GM13976 (cell line): ENCODE measurements at regions of chr1 and their contacts with region 1.

Region 1: DNA sequence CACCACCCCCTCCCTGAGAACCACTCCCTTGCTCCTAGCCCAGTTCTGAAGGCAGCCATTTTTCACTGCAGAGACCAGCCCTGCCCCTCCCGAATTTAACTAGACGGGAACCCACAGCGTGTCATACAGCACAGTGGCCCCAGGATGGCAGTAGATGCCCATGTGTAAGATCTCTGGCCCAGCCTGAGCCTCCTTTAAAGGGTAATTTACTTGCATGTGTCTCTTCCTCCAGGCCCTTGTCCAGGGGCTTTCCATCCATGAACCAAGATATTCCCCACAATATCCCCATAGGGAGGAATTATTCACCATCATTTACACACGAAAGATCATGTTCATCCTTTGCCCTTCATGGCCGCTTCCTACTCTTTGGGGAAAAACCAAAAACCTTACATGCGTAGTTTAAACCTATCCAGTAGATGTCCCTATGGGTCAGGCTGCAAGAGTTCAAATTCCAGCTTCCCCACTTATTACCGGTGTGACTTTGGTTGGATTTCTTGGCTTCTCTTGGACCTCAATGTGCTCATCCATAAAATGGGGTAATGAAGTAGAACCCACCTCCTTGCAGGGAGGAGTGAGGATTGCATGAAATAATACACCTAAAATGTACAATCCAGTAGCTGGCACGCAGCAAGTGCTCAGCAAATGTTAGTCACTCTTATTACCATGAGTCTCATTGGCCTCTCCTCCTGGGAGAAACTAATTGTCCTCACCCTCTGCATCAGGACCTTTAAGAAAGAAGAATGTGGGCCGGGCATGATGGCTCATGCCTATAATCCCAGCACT is 4.0 kb upstream of the LACTBL1 start:
- DNase-seq: peak; percentile 76
- CTCF ChIP-seq: peak; percentile 76

Region 2: DNA sequence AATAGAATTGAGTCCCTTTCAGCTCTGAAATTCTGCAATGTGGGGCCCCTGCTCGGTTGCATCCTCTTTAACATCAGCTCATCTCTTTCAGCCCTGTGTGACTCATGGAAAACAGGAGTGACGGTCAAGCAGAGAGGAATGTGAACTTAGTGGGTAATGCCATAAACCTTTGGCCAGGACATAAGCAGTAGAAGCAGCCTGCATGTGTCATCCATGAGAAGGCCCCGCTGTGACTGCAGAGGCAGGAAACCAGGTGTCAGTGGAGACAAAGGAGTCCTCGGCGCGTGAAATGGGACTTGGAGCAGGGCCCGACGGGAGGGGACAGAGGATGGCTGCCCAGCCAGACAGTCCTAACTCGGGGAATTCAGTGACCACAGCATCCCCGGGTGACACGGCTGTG is 287.1 kb before region 1 on chr1:
- in situ Hi-C with region 1: no loop called
- DNase-seq: no peak
- CTCF ChIP-seq: no peak

Region 3: DNA sequence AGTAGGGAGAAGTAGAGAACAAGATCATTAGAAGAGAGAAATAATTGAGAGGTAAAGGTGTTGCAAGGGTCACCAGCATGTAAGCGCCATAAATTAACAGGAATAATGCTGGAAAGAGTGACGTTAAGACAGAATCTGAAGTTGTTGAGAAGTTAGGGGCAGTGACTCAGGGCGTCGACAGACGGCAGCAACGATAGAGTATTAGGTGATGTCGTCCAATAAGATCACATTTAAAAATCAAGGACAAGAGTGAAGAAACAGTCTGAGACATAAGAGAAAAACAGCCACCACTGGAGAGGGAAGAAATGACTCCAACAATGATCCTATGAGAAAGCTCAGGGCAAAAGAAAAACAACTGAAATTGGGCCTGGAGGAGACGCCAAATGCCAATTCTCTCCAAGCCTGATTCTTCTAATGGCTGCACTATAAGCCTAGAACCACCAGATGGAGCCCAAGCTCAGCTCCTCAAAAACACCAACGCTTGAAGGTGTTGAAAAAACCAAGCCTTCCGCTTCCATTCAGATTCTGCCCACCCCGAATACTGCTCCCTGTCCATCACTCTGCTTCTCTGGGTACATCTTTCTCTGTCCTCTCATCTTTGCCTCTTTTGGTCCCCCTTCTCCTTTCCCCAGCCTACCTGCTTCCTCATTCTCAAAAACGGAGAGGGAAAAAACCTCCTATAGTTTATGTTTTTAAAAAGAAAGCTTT is 122.0 kb after region 1 on chr1:
- in situ Hi-C with region 1: loop called (anchors 10 kb)
- DNase-seq: peak; percentile 63
- CTCF ChIP-seq: peak; percentile 77

Region 4: DNA sequence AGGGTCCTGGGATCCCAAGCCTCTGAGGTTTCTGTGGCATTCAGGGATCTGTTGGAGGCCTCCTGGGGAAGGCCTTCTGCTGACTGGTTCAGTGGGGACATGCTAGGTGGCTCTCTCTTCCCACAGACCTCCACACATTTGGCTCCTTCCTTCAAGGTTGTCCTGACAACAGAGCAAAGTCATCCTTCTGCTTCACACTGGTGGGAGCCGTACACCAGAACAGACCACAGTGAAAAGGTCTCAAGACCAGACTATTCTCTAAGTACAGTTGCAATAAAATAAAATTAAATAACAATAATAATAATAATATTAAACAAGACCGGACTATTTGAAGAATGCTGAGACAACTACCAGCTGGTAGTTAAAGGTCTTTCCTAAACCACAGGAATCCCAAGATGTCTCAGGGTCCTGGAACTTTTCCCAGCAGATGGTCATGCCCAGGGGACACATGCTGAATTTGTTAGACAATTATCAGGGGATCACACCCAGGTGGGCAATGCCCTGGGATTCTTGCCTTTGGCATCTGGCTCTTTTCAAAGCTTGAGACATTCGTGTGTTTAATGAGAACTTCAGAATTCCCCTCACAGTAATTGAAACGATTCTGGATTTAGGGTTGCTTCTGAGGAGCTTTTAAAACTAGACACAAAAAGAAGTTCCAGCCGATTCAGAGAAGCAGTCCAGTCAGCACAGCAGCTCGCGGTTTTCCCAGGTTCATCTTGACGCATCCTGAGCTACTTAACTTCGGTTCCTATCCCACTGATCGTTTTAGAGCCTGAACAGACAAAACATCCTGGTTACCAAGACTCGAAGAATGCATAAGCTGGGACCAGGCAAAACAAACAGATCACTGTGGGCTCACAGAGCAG is 217.7 kb after region 1 on chr1:
- in situ Hi-C with region 1: loop called (anchors 5 kb)
- DNase-seq: no peak
- CTCF ChIP-seq: no peak